Prostate gland (tissue), 2 donors: ENCODE measurements at regions of chr19 and their contacts with region 1.

Region 1: GRCh38 chr19:46746281-46747013 is at the start of gene STRN4:
- DNase-seq: no peak
- H3K4me3 ChIP-seq: peak within 1 kb of the TSS; percentile 98
- H3K27ac ChIP-seq: peak within 1 kb of the TSS; percentile 84 to 93
- H3K4me1 ChIP-seq: peaks cover 5% of the 10 kb centered on the region
- H3K27me3 ChIP-seq: no peaks in the 10 kb centered on the region
- CTCF ChIP-seq: no peak
- POLR2A ChIP-seq: peak; percentile 14
- total RNA-seq, gene STRN4: 80.7 to 221 TPM

Region 2: DNA sequence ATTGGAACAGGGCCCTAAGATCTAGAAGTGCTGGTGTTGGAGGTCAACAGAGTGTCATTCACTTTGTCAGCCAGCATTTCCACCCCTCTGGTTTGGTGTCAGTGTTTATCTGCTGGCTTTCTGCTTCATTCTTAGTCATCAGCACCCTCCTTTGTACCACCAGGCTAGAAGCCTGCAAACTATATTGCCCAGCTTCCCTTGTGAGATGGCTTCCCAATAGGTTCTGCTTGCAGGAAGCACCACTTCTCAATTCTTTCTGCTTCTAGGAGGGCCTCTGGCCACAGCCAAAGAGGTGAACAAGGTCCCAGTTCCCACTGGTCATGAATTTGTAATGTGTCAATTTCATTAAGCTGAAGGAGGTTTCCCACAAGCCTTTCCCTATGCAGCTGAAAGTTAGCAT is 181.7 kb before region 1 on chr19:
- intact Hi-C with region 1: no loop called
- DNase-seq: no peak
- H3K4me3 ChIP-seq: no peak overlapping the region
- H3K27ac ChIP-seq: no peak overlapping the region
- H3K4me1 ChIP-seq: no peaks in the 10 kb centered on the region
- H3K27me3 ChIP-seq: no peaks in the 10 kb centered on the region
- CTCF ChIP-seq: no peak
- POLR2A ChIP-seq: no peak

Region 3: DNA sequence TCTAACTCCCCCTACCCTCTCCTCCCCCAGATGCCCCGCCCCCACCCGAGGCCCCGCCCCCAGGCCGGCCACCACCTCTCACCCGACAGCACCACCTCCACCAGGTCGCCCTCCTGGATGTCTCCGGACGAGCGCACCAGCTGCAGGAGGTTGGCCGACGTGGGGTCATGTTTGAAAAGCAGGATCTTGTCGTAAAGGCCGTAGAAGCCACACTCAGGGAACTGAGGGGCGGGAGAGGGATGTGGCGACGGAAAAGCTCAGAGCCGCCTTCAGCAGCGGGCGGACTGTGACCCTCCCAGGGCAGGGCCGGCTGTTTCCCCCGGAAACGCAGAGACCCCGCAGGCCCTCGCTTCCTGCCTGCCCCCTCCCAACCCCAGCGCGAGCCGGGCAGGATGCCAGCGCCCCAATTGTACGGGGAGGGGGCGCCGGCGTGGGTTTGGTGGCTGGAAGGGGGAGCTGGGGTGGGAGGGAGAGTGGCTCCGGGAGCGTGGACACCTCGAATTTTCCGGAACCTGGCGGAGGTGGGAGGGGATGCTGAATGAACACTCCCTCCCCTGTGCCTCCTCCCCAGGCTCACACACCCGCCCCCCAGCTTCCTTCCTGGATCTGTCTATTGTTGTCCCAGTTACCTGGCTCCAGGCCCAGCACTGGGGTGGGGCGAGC is 32.5 kb before region 1 on chr19:
- intact Hi-C with region 1: loop called (anchors 5 kb)
- DNase-seq: peak; percentile 97
- H3K4me3 ChIP-seq: peak overlapping the region; percentile 60 to 63
- H3K27ac ChIP-seq: peak overlapping the region; percentile 95 to 97
- H3K4me1 ChIP-seq: no peaks in the 10 kb centered on the region
- H3K27me3 ChIP-seq: no peaks in the 10 kb centered on the region
- CTCF ChIP-seq: no peak
- POLR2A ChIP-seq: no peak

Region 4: DNA sequence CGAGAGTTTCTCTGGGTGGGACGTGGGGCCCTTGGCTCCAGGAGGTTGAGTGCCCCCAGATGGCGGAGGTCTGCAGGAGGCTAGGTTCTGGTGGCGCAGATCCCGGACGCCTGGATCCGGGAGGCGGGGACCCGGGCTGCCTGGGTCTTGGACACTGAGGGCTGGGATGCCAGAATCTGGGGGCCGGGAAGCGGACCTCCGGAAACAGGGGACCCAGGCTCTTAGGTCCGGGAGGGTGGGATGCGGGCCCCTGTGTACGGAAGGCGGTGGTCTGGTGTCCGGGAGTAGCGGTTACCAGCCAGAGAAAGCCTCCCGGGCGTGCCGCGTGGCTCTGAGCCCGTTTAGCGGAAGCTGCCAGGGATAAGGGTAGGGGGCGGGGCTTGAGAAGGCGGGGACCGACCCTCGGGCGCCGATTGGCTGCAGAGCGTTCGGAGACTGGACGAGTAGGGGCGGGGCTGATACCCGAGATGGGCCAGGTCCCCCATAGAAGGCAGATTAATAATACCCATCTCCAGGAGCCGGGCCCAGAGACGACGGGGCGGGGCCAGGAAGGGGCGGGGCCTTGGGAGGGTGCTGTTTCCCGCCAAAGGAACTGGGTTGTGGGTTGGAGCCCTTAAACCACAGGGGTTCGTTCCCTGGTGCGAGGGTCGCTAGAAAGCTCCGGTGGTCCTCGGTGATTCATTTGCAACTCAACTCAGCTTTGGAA is 42.0 kb after region 1 on chr19 and contains the start of gene SLC1A5:
- intact Hi-C with region 1: loop called (anchors 5 kb)
- DNase-seq: peak; percentile 98
- H3K4me3 ChIP-seq: peak within 1 kb of the TSS; percentile 76 to 93
- H3K27ac ChIP-seq: peak within 1 kb of the TSS; percentile 89 to 92
- H3K4me1 ChIP-seq: peaks cover 10% of the 10 kb centered on the region
- H3K27me3 ChIP-seq: no peaks in the 10 kb centered on the region
- CTCF ChIP-seq: no peak
- POLR2A ChIP-seq: peak; percentile 97
- total RNA-seq, gene SLC1A5: 122 to 214 TPM

Region 5: GRCh38 chr19:46840136-46840942 is 93.9 kb after region 1 on chr19:
- intact Hi-C with region 1: no loop called
- DNase-seq: no peak
- H3K4me3 ChIP-seq: no peak overlapping the region
- H3K27ac ChIP-seq: peak overlapping the region; percentile 68 to 75
- H3K4me1 ChIP-seq: peaks cover 10% of the 10 kb centered on the region
- H3K27me3 ChIP-seq: no peaks in the 10 kb centered on the region
- CTCF ChIP-seq: peak; percentile 75 to 93 (median 85)
- POLR2A ChIP-seq: no peak

Region 6: GRCh38 chr19:47035127-47036096 is 289.0 kb after region 1 on chr19:
- intact Hi-C with region 1: no loop called
- DNase-seq: peak; percentile 85
- H3K4me3 ChIP-seq: peak overlapping the region; percentile 29 to 36
- H3K27ac ChIP-seq: peak overlapping the region; percentile 69 to 75
- H3K4me1 ChIP-seq: no peaks in the 10 kb centered on the region
- H3K27me3 ChIP-seq: no peaks in the 10 kb centered on the region
- CTCF ChIP-seq: peak; percentile 93 to 99 (median 96)
- POLR2A ChIP-seq: peak; percentile 41